ENCODE measurements at regions of chr19 and their contacts with region 1.

Region 1: DNA sequence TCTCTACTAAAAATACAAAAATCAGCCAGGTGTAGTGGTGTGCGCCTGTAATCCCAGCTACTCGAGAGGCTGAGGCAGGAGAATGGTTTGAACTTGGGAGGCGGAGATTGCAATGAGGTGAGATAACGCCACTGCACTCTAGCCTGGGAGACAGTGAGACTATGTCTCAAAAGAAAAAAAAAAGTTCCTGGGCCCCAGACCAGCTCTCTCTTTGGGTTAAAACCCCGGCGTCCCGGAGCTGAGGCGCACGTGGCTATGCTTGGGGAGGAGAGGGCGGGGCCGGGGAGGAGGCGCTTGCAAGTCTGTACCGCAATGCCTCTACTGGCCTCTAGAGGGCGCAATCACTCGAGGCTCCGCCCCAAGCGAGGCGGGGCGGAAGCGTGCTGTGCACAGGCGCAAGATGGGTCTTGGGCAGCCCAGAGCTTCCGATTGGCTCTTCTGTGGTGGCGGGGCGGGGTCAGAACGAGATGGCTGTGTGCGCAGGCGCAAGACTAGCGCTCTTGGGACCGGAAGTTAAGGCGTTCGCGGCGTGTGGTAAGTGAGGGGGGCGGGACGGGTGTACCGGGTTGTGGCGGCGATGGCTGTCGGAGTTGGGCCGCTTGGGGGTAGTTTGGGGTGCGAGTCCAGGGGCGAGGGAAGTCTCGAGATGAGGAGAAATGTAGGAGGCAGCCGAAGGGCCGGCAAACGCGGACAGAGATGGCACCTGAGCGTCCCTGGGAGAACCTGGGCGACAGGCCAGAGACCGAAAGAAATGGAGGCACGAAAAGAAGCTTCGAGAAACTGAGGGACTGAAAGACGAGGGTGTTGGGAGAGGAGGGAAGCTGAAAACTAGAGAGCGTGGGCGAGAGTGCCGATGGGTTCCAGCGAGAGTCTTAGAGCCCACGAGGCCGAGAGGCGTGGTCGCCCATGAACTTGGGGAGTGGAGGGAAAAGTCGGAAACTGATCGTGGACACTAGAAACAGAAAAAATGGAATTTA is at the start of gene DHX34:
- DNase-seq: peak; percentile 99 to 100 (median 99)
- H3K4me3 ChIP-seq: peak within 1 kb of the TSS; percentile 67 to 70
- H3K4me3 Mint-ChIP-seq: peak within 1 kb of the TSS; percentile 88 to 99 (median 98)
- H3K27ac ChIP-seq: peak within 1 kb of the TSS; percentile 80
- H3K27ac Mint-ChIP-seq: peak within 1 kb of the TSS; percentile 86 to 99 (median 97)
- H3K4me1 ChIP-seq: peaks cover 27% of the 10 kb centered on the region
- H3K4me1 Mint-ChIP-seq: peaks cover 23 to 48% (median 34%) of the 10 kb centered on the region in 4 donors
- H3K27me3 ChIP-seq: no peaks in the 10 kb centered on the region
- H3K27me3 Mint-ChIP-seq: peaks cover 0 to 2% of the 10 kb centered on the region in 2 donors
- total RNA-seq, gene DHX34: 26.5 to 27.3 TPM

Region 2: DNA sequence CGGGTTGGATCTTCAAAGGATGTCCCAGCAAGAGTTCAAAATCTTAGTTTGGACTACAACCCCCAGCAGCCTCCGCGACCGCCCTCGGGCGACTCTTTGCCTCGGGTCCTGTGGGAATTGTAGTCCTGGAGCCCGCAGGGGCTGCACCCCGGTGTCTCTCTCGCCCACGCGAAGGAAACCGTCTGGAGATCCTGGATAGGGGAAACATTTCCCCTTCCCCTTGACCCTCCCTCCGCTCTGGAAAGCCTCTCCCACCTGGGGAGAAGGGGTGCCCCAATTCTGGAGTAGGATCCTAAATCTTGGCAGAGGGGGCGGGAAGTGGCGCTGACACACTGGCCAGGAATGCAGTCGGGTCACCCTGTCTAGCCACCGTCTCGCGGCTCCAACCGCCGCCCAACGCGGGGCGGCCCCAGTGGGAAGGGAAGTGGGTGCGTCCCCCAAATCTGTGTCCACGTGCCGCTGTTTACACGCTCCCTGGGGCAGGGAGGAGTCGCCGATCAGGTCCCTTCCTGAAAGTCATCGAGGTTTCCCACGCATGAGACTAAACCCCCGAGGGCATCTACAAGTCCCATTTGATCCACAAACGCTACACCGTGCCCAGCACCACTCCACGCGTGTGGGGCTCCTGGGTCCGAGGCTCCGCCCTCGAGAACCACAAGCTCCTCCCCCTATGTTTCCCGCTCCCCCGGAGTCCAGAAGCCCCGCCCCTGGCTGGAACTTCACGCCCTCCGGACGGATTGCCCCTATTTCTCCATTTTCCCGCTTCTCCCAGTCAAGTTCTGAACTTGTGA is 1943.5 kb before region 1 on chr19:
- CTCF ChIA-PET with region 1: no interaction called
- POLR2A ChIA-PET with region 1: no interaction called
- intact Hi-C with region 1: loop called (anchors 5 kb)
- DNase-seq: peak; percentile 80 to 91 (median 82)
- H3K4me3 ChIP-seq: peak overlapping the region; percentile 91 to 94
- H3K4me3 Mint-ChIP-seq: peak overlapping the region; percentile 90 to 99 (median 97)
- H3K27ac ChIP-seq: peak overlapping the region; percentile 65
- H3K27ac Mint-ChIP-seq: peak overlapping the region; percentile 69 to 99 (median 96)
- H3K4me1 ChIP-seq: peaks cover 35% of the 10 kb centered on the region
- H3K4me1 Mint-ChIP-seq: peaks cover 13 to 35% (median 26%) of the 10 kb centered on the region in 4 donors
- H3K27me3 ChIP-seq: peaks cover 16% of the 10 kb centered on the region
- H3K27me3 Mint-ChIP-seq: peaks cover 12 to 22% of the 10 kb centered on the region in 2 donors

Region 3: GRCh38 chr19:47296036-47296435 is 53.1 kb before region 1 on chr19:
- CTCF ChIA-PET with region 1: interaction called, 14 read pairs
- POLR2A ChIA-PET with region 1: interaction called, 3 read pairs
- intact Hi-C with region 1: no loop called
- DNase-seq: peak; percentile 75 to 80 (median 77)
- H3K4me3 ChIP-seq: no peak overlapping the region
- H3K4me3 Mint-ChIP-seq: no peak overlapping the region
- H3K27ac ChIP-seq: no peak overlapping the region
- H3K27ac Mint-ChIP-seq: no peak overlapping the region
- H3K4me1 ChIP-seq: peaks cover 5% of the 10 kb centered on the region
- H3K4me1 Mint-ChIP-seq: peaks cover 2 to 9% (median 4%) of the 10 kb centered on the region in 4 donors
- H3K27me3 ChIP-seq: no peaks in the 10 kb centered on the region
- H3K27me3 Mint-ChIP-seq: no peaks in the 10 kb centered on the region

Region 4: GRCh38 chr19:47336853-47337279 is 12.2 kb before region 1 on chr19:
- CTCF ChIA-PET with region 1: interaction called, 58 read pairs
- POLR2A ChIA-PET with region 1: interaction called, 49 read pairs
- intact Hi-C with region 1: no loop called
- DNase-seq: peak in 3 of 5 donors; percentile 13 to 36 (median 35)
- H3K4me3 ChIP-seq: no peak overlapping the region
- H3K4me3 Mint-ChIP-seq: peak overlapping the region in 7 of 8 donors; percentile 28 to 72 (median 68)
- H3K27ac ChIP-seq: no peak overlapping the region
- H3K27ac Mint-ChIP-seq: peak overlapping the region in 5 of 7 donors; percentile 48 to 95 (median 86)
- H3K4me1 ChIP-seq: peaks cover 20% of the 10 kb centered on the region
- H3K4me1 Mint-ChIP-seq: peaks cover 8 to 27% (median 16%) of the 10 kb centered on the region in 4 donors
- H3K27me3 ChIP-seq: no peaks in the 10 kb centered on the region
- H3K27me3 Mint-ChIP-seq: no peaks in the 10 kb centered on the region

Region 5: GRCh38 chr19:47391510-47392223 is 42.6 kb after region 1 on chr19:
- CTCF ChIA-PET with region 1: interaction called, 12 read pairs
- POLR2A ChIA-PET with region 1: interaction called, 5 read pairs
- intact Hi-C with region 1: no loop called
- DNase-seq: peak; percentile 74 to 76 (median 75)
- H3K4me3 ChIP-seq: no peak overlapping the region
- H3K4me3 Mint-ChIP-seq: no peak overlapping the region
- H3K27ac ChIP-seq: no peak overlapping the region
- H3K27ac Mint-ChIP-seq: peak overlapping the region in 1 of 7 donors; percentile 30
- H3K4me1 ChIP-seq: no peaks in the 10 kb centered on the region
- H3K4me1 Mint-ChIP-seq: peaks cover 0 to 5% (median 3%) of the 10 kb centered on the region in 4 donors
- H3K27me3 ChIP-seq: no peaks in the 10 kb centered on the region
- H3K27me3 Mint-ChIP-seq: peaks cover 7 to 9% of the 10 kb centered on the region in 2 donors

Region 6: GRCh38 chr19:47483800-47484690 is 134.9 kb after region 1 on chr19 and contains the start of gene KPTN:
- CTCF ChIA-PET with region 1: no interaction called
- POLR2A ChIA-PET with region 1: no interaction called
- intact Hi-C with region 1: loop called (anchors 1 kb)
- DNase-seq: peak; percentile 87 to 92 (median 90)
- H3K4me3 ChIP-seq: peak within 1 kb of the TSS; percentile 44 to 72
- H3K4me3 Mint-ChIP-seq: peak within 1 kb of the TSS; percentile 91 to 100 (median 98)
- H3K27ac ChIP-seq: peak within 1 kb of the TSS; percentile 86
- H3K27ac Mint-ChIP-seq: peak within 1 kb of the TSS; percentile 96 to 100 (median 99)
- H3K4me1 ChIP-seq: peaks cover 21% of the 10 kb centered on the region
- H3K4me1 Mint-ChIP-seq: peaks cover 16 to 42% (median 22%) of the 10 kb centered on the region in 4 donors
- H3K27me3 ChIP-seq: no peaks in the 10 kb centered on the region
- H3K27me3 Mint-ChIP-seq: no peaks in the 10 kb centered on the region
- total RNA-seq, gene KPTN: 4.0 to 4.3 TPM

Region 7: DNA sequence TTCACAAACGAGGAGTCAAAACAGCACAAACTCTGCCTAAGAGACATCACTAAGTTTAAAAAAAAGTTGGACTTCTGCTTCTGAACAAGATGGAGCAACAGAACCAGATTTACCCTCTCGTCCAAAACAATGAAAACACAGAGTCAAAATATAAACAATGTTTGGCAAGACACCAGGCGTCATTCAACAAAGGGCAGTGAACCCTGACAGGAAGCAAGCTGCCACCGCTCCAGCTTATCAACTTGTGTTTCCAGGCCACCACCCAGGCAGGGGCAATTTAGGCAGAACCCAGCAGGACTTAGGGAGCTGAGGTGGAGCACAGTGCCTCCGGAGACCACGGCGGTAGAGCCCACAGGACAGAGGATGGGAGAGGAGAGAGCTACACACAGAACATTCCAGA is 174.4 kb after region 1 on chr19:
- CTCF ChIA-PET with region 1: no interaction called
- POLR2A ChIA-PET with region 1: no interaction called
- intact Hi-C with region 1: no loop called
- DNase-seq: no peak
- H3K4me3 ChIP-seq: no peak overlapping the region
- H3K4me3 Mint-ChIP-seq: no peak overlapping the region
- H3K27ac ChIP-seq: no peak overlapping the region
- H3K27ac Mint-ChIP-seq: peak overlapping the region in 2 of 7 donors; percentile 8 to 25
- H3K4me1 ChIP-seq: peaks cover 9% of the 10 kb centered on the region
- H3K4me1 Mint-ChIP-seq: peaks cover 0 to 14% (median 7%) of the 10 kb centered on the region in 4 donors
- H3K27me3 ChIP-seq: no peaks in the 10 kb centered on the region
- H3K27me3 Mint-ChIP-seq: peaks cover 3 to 5% of the 10 kb centered on the region in 2 donors

Region 8: DNA sequence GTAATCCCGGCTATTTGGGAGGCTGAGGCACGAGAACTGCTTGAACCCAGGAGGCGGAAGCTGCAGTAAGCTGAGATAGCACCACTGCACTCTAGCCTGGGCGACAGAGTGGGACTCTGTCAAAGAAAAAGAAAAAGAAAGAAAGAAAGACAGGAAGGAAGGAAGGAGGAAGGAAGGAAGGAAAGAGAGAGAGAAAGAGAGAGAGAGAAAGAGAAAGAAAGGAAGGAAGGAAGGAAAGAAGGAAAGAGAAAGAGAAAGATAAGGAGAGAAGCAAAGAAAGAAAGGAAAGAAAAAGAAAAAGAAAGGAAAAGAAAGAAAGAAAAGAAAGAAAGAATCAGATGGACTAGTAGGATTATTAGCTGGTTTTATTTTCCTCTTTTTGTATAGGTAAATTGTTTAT is 201.0 kb after region 1 on chr19:
- CTCF ChIA-PET with region 1: no interaction called
- POLR2A ChIA-PET with region 1: no interaction called
- intact Hi-C with region 1: no loop called
- DNase-seq: no peak
- H3K4me3 ChIP-seq: no peak overlapping the region
- H3K4me3 Mint-ChIP-seq: no peak overlapping the region
- H3K27ac ChIP-seq: no peak overlapping the region
- H3K27ac Mint-ChIP-seq: peak overlapping the region in 2 of 7 donors; percentile 29 to 81
- H3K4me1 ChIP-seq: no peaks in the 10 kb centered on the region
- H3K4me1 Mint-ChIP-seq: no peaks in the 10 kb centered on the region
- H3K27me3 ChIP-seq: no peaks in the 10 kb centered on the region
- H3K27me3 Mint-ChIP-seq: no peaks in the 10 kb centered on the region

Measured in CD4-positive, alpha-beta memory T cell (primary cell).